Ascending aorta (tissue), 2 donors: ENCODE measurements at regions of chr15 and their contacts with region 1.

Region 1: GRCh38 chr15:34101366-34102175 is at the starts of genes EMC7 and PGBD4:
- DNase-seq: peak; percentile 97 to 99
- H3K4me3 ChIP-seq: peak within 1 kb of the TSS; percentile 85 to 86
- H3K27ac ChIP-seq: peak within 1 kb of the TSS; percentile 86 to 87
- H3K4me1 ChIP-seq: peaks cover 0 to 3% of the 10 kb centered on the region in 2 donors
- H3K27me3 ChIP-seq: no peaks in the 10 kb centered on the region
- CTCF ChIP-seq: no peak
- total RNA-seq, gene EMC7: 51.0 TPM
- total RNA-seq, gene PGBD4: 3.5 TPM

Region 2: DNA sequence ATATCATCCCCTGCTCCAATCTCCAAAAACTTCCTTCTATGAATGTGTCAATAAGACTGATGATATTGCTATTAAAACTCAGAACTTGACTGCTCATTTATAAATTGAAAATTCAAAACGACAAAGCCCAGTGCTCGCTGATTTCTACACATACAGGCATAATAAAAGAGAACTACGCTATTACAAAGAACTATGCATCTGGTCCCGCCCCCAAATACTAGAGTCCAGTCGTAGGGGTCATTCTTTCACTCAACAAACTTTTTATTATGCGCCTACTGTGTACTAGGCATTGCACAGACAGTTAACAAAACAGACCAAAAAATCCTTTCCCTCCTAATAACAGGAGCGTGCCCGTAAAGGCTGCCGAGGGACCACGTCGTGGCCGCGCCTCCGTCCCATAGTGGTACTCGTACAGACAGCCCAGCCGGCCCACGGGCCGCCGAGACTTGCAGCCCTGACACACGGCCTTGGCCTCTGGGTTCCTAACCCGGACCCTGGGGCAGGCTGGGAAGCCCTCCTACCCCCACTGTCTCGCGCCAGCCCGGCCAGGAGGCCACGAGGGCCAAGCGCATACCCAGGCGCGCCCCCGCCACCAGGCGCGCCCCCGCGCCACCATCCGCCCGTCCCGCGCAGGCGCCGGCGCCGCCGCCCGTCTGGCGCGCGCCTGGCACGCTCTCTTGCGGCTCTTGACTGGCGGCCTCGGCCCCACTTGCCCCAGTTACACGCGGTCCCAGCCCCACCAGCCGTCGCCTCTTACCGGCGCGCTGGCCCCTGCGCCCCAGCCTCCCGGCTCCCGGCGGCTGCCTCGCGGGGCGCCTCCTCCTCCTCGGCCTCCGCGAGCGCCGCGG is 63.3 kb before region 1 on chr15:
- intact Hi-C with region 1: loop called (anchors 2 kb)
- DNase-seq: peak in 1 of 2 donors; percentile 86
- H3K4me3 ChIP-seq: peak overlapping the region; percentile 65 to 84
- H3K27ac ChIP-seq: peak overlapping the region; percentile 89 to 93
- H3K4me1 ChIP-seq: peaks cover 5% of the 10 kb centered on the region in 2 donors
- H3K27me3 ChIP-seq: no peaks in the 10 kb centered on the region
- CTCF ChIP-seq: no peak

Region 3: GRCh38 chr15:34209421-34210282 is 108.1 kb after region 1 on chr15 and contains the start of gene KATNBL1:
- intact Hi-C with region 1: loop called (anchors 1 kb)
- DNase-seq: peak; percentile 82 to 97
- H3K4me3 ChIP-seq: peak within 1 kb of the TSS; percentile 92
- H3K27ac ChIP-seq: peak within 1 kb of the TSS; percentile 80 to 86
- H3K4me1 ChIP-seq: peaks cover 0 to 10% of the 10 kb centered on the region in 2 donors
- H3K27me3 ChIP-seq: no peaks in the 10 kb centered on the region
- CTCF ChIP-seq: peak; percentile 85 to 94 (median 94)
- total RNA-seq, gene KATNBL1: 34.3 TPM

Region 4: DNA sequence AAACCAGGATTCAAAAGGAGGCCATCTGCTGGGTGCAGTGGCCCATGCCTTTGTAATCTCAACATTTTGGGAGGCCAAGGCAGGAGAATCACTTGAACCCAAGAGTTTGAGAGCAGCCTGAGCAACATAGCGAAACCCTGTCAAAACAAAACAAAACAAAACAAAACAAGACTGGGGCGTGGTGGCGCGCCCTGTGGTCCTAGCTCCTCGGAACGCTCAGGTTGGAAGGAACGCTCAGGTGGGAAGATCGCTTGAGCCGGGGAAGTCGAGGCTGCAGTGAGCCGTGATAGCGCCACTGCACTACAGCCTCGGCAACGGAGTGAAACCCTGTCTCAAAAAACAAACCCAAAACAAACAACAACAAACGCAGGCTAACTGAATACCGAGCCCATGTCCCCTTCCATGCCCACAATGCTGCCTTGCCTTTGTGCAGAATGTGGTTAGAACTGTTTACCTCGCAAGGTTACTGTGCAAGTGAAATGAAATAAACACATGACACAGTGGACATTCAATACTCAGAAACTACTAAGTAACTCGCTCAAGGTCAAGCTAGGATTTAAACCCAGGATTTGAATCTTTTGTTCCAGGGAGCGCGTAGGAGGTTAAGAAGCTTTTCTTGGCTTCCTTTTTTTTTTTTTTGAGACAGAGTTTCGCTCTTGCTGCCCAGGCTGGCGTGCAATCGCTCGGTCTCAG is 122.5 kb after region 1 on chr15:
- intact Hi-C with region 1: loop called (anchors 1 kb)
- DNase-seq: no peak
- H3K4me3 ChIP-seq: peak overlapping the region; percentile 65 to 90
- H3K27ac ChIP-seq: peak overlapping the region; percentile 80 to 81
- H3K4me1 ChIP-seq: peaks cover 5 to 10% of the 10 kb centered on the region in 2 donors
- H3K27me3 ChIP-seq: no peaks in the 10 kb centered on the region
- CTCF ChIP-seq: no peak

Region 5: DNA sequence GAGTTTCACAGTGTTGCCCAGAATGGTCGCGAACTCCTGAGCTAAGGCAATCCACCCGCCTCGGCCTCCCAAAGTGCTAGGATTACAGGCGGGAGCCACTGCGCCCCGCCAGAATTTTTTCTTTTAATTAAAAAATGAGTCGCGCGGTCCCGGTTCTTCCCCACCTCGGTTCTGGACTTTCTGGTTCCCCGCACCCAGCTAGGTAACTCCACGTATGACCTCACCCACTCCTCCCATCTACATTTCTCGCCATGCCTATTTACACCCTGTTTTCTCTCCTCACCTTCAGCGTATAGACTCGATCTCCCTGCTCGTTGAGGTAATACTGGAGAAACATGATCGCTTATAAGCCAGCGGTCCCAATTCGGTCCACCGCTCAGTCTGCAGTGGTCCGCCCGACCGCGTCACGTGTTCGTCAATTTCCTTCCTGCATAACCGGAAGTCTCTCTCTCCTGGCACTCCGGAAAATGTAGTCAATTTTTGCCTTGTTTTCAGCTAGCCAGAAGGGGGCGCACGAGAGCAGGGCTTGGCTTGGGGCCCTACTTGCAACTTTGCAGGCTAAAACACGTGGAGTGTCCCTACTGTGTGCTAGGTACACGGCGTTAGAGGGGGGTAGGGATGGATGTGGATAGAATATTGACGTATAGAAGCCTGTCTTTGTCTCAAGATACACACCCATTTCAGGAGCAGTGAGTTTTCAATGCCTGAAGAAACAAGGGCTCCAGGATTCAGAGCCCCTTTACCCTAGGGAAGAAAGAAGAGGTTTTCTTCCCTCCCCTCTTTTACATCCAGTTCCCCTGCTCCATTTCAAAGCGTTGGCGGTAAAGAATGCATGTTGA is 241.4 kb after region 1 on chr15 and contains the starts of genes NOP10 and NUTM1:
- intact Hi-C with region 1: loop called (anchors 5 kb)
- DNase-seq: peak; percentile 63 to 95
- H3K4me3 ChIP-seq: peak within 1 kb of the TSS; percentile 67 to 77
- H3K27ac ChIP-seq: peak within 1 kb of the TSS; percentile 71 to 87
- H3K4me1 ChIP-seq: peaks cover 7 to 13% of the 10 kb centered on the region in 2 donors
- H3K27me3 ChIP-seq: no peaks in the 10 kb centered on the region
- CTCF ChIP-seq: peak; percentile 93 to 96 (median 95)
- total RNA-seq, gene NOP10: 212 TPM
- total RNA-seq, gene NUTM1: not detected

Region 6: GRCh38 chr15:34367101-34368081 is 265.8 kb after region 1 on chr15 and contains the start of gene LPCAT4:
- intact Hi-C with region 1: loop called (anchors 1 kb)
- DNase-seq: peak; percentile 52 to 94
- H3K4me3 ChIP-seq: peak within 1 kb of the TSS; percentile 87 to 90
- H3K27ac ChIP-seq: peak within 1 kb of the TSS; percentile 91 to 95
- H3K4me1 ChIP-seq: peaks cover 6 to 11% of the 10 kb centered on the region in 2 donors
- H3K27me3 ChIP-seq: no peaks in the 10 kb centered on the region
- CTCF ChIP-seq: peak; percentile 96 to 97 (median 97)
- total RNA-seq, gene LPCAT4: 113 TPM

Region 7: DNA sequence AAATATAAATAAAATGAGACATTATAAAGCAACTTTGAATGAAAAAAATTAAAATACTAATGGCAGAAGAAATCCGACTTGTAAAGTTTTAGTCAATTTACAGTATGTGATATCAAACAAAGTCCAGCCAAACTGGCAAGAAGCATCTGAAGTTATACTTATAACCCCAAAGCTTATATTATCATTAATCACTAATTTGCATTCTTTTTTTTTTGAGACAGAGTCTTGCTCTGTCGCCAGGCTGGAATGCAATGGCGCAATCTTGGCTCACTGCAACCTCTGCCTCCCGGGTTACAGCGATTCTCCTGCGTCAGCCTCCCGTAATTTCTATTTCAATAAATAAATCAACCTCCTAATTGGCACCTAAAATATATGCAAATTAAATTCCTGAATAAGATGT is 787.9 kb after region 1 on chr15:
- intact Hi-C with region 1: no loop called
- DNase-seq: no peak
- H3K4me3 ChIP-seq: no peak overlapping the region
- H3K27ac ChIP-seq: no peak overlapping the region
- H3K4me1 ChIP-seq: no peaks in the 10 kb centered on the region
- H3K27me3 ChIP-seq: no peaks in the 10 kb centered on the region
- CTCF ChIP-seq: no peak

Region 8: GRCh38 chr15:34987985-34988873 is 886.7 kb after region 1 on chr15 and contains the start of gene ZNF770:
- intact Hi-C with region 1: loop called (anchors 5 kb)
- DNase-seq: peak in 1 of 2 donors; percentile 86
- H3K4me3 ChIP-seq: peak within 1 kb of the TSS; percentile 71 to 85
- H3K27ac ChIP-seq: peak within 1 kb of the TSS; percentile 95 to 97
- H3K4me1 ChIP-seq: peaks cover 0 to 24% of the 10 kb centered on the region in 2 donors
- H3K27me3 ChIP-seq: no peaks in the 10 kb centered on the region
- CTCF ChIP-seq: no peak
- total RNA-seq, gene ZNF770: 87.7 TPM

Region 9: GRCh38 chr15:35061825-35062737 is 960.5 kb after region 1 on chr15:
- intact Hi-C with region 1: no loop called
- DNase-seq: no peak
- H3K4me3 ChIP-seq: no peak overlapping the region
- H3K27ac ChIP-seq: no peak overlapping the region
- H3K4me1 ChIP-seq: no peaks in the 10 kb centered on the region
- H3K27me3 ChIP-seq: no peaks in the 10 kb centered on the region
- CTCF ChIP-seq: no peak